Panc1 (cell line): ENCODE measurements at regions of chr14 and their contacts with region 1.

Region 1: DNA sequence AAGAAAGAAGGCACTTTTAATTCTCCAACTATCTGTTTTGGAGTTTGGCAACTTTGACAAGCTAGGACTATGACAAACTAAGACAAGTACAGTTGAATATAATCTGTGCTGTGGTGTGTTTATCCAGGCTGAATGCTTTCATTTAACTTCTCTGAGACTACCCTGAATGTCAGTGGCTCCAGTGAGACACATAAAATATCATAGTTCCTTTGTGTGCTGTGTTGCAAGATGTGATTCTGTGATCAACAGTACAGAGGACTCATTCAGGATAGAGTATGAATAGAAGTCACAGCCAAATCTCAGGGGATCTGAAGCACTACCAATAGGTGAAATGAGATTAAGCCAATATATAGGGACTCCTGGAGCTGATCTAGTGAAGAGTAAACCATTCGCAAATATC is 876.9 kb upstream of the FBXO33 start:
- DNase-seq: no peak
- ATAC-seq: no peak
- H3K4me3 ChIP-seq: no peak overlapping the region
- H3K27ac ChIP-seq: no peak overlapping the region
- H3K4me1 ChIP-seq: no peaks in the 10 kb centered on the region
- H3K27me3 ChIP-seq: no peaks in the 10 kb centered on the region
- CTCF ChIP-seq: no peak

Region 2: DNA sequence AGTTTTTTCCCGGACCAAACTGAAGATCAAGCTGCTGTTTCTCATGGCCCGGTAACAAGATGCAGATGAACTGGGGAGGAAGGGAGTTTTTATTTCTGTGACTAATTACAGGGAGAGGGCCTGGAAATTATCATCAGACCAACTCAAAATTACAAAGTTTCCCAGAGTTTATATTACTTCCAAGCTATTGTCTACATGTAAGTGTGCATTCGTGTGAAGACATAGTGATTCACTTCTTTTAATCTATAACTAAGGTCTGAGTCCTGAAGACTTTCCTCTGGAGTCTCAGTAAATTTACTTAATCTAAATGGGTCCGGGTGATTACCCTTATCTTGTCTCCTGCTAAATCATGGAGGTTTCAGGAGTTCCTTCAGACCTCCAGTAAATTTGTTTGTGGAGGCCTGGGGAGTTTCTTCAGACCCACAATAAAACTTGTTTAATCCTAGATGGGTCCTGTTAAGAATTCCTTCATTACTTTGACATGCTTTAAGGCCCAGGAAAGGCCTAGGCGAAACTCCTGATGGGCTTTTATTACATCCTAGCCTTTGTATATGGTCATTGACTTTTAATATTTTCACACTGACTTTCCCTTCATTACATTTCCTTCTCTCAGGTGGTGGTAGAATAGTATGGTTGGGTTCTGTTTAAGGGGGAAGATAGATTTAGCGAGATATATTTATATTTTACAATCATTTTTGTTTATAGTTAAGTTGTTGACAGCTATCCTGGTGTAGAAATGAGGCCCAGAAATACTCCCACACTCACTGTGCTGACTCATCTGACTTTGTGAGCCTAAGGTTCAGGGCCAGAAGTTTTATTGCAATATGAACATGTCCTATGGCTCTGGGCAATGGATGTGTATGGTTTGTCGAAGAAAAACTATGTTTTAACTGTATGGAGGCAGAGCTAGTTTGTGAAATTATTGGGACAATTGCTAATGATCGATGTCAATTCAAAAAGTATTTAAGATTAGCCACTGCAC is 249.9 kb before region 1 on chr14:
- CTCF ChIA-PET with region 1: no interaction called
- POLR2A ChIA-PET with region 1: no interaction called
- in situ Hi-C with region 1: no loop called
- intact Hi-C with region 1: loop called (anchors 10 kb)
- DNase-seq: no peak
- ATAC-seq: no peak
- H3K4me3 ChIP-seq: no peak overlapping the region
- H3K27ac ChIP-seq: no peak overlapping the region
- H3K4me1 ChIP-seq: no peaks in the 10 kb centered on the region
- H3K27me3 ChIP-seq: no peaks in the 10 kb centered on the region
- CTCF ChIP-seq: no peak

Region 3: DNA sequence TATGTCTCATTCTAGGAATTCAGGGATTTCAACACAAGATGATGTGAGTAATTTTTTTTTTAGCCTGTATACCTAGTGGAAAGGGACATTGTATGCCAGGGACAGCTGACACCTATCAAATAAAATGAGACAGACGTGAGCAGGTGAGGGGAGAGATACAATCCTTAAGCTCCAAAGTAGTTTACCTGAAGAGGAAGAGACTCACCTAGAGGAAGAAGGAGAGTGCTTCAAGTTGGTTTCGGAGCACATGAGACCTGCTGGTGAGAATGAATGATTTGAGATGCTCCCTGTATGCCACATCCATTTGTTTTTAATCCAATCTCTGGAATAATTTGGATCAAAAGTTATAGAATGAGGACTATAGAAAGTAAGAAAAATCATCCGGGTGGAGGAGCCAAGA is 38.6 kb after region 1 on chr14:
- CTCF ChIA-PET with region 1: no interaction called
- POLR2A ChIA-PET with region 1: no interaction called
- in situ Hi-C with region 1: no loop called
- intact Hi-C with region 1: no loop called
- DNase-seq: no peak
- ATAC-seq: no peak
- H3K4me3 ChIP-seq: no peak overlapping the region
- H3K27ac ChIP-seq: no peak overlapping the region
- H3K4me1 ChIP-seq: no peaks in the 10 kb centered on the region
- H3K27me3 ChIP-seq: no peaks in the 10 kb centered on the region
- CTCF ChIP-seq: no peak